Gastrocnemius medialis (tissue), 4 donors: ENCODE measurements at regions of chr10 and their contacts with region 1.

Region 1: DNA sequence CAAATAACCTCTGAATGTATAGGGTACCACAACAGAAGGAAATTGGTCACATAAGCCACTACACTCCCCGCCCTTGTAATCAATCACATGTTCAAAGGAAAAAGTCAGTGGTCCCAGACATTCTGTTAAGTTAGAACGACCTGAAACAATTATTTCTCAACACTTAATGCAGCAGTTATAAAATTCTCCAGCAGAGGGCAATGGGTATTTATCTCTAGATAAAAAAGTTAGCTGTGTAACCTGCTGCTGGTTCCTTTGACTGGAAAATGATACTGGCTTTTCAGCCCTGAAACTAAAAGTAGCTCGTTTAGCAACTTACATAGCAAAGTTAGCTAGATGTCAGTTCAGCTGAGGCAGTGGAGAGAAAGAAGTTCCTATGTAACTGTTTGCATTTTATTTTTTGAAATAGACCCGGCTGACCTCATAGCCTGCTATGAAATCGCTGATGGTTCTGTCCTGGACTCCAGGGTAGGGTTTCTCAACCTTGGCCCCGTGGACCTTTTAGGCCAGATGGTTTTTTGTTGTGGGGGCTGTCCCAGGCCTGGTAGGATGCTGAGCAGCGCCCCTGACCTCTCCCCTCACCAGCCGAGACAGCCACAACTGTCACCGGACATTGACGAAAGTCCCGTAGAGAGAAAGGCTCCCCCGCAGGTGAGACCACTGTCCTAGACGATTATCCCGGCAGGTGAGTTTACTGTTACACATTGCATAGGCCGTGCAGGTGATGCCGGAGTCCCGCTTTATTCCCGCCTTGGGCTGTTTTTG is 40.2 kb upstream of the PROSER2 start:
- DNase-seq: no peak
- ATAC-seq: peak in 1 of 2 donors; percentile 62
- H3K4me3 ChIP-seq: no peak overlapping the region
- H3K27ac ChIP-seq: no peak overlapping the region
- H3K4me1 ChIP-seq: no peaks in the 10 kb centered on the region
- H3K27me3 ChIP-seq: peaks cover 0 to 2% (median 0%) of the 10 kb centered on the region in 3 donors
- CTCF ChIP-seq: peak; percentile 19 to 65 (median 57)
- POLR2A ChIP-seq: no peak

Region 2: GRCh38 chr10:11986593-11987216 is 203.7 kb after region 1 on chr10:
- in situ Hi-C with region 1: loop called in 3 of 4 experiments (anchors 10 to 25 kb)
- intact Hi-C with region 1: loop called (anchors 5 kb)
- DNase-seq: peak; percentile 10 to 41
- ATAC-seq: peak in 1 of 2 donors; percentile 53
- H3K4me3 ChIP-seq: no peak overlapping the region
- H3K27ac ChIP-seq: no peak overlapping the region
- H3K4me1 ChIP-seq: peaks cover 0 to 3% of the 10 kb centered on the region in 2 donors
- H3K27me3 ChIP-seq: no peaks in the 10 kb centered on the region
- CTCF ChIP-seq: peak; percentile 50 to 82 (median 53)
- POLR2A ChIP-seq: no peak